Calu3 (cell line): ENCODE measurements at regions of chr15 and their contacts with region 1.

Region 1: GRCh38 chr15:80072285-80072994 is 13.0 kb downstream of the ZFAND6 start:
- DNase-seq: peak; percentile 56
- H3K4me3 Mint-ChIP-seq: peak overlapping the region; percentile 68
- H3K27ac Mint-ChIP-seq: peak overlapping the region; percentile 56
- H3K4me1 Mint-ChIP-seq: peaks cover 24% of the 10 kb centered on the region
- H3K27me3 Mint-ChIP-seq: no peaks in the 10 kb centered on the region
- CTCF ChIP-seq: no peak

Region 2: GRCh38 chr15:79769069-79769481 is 303.4 kb before region 1 on chr15:
- CTCF ChIA-PET with region 1: no interaction called
- intact Hi-C with region 1: no loop called
- DNase-seq: peak; percentile 23
- H3K4me3 Mint-ChIP-seq: no peak overlapping the region
- H3K27ac Mint-ChIP-seq: no peak overlapping the region
- H3K4me1 Mint-ChIP-seq: no peaks in the 10 kb centered on the region
- H3K27me3 Mint-ChIP-seq: peaks cover 50% of the 10 kb centered on the region
- CTCF ChIP-seq: peak; percentile 52

Region 3: DNA sequence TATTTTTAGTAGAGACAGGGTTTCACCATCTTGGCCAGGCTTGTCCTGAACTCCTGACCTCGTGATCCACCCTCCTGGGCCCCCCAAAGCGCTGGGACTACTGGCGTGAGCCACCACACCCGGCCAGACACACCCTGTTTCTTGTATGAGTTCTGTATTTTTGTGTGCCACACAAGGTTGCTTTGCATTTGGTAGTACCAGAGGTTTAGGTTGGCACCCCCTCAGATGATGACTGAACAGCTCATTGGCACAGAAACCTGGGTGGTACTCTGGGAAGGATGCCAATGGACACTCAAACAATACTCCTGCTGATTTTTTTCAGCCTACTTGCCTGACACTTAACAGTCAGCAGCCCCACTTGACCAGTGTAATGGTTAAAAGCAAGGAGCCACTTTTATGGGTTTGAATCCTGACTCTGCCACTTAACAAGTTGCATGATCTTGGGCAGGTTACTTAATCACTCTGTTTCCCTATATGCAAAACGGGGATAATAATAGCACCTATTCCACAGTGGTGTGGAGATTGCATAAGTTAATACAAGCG is 62.2 kb before region 1 on chr15:
- CTCF ChIA-PET with region 1: no interaction called
- intact Hi-C with region 1: loop called (anchors 10 kb)
- DNase-seq: peak; percentile 31
- H3K4me3 Mint-ChIP-seq: no peak overlapping the region
- H3K27ac Mint-ChIP-seq: peak overlapping the region; percentile 52
- H3K4me1 Mint-ChIP-seq: peaks cover 30% of the 10 kb centered on the region
- H3K27me3 Mint-ChIP-seq: no peaks in the 10 kb centered on the region
- CTCF ChIP-seq: no peak